ENCODE measurements at regions of chr10 and their contacts with region 1.

Region 1: DNA sequence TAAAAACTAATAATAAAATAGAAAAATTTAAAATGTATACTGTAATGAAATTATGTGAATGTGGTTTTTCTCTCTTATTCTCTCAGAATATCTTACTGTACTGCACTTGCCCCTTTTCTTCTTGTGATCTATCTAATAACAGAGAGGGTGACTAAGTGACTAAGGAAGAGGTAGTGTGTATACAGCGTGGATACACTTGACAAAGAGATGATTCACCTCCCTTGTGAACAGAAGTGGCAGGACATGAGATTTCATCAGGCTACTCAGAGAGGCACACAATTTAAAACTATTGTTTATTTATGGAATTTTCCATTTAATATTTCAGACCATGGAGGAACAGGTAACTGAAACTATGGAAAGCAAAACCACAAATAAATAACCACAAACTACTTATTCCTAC is 806.6 kb upstream of the GHITM start:
- DNase-seq: no peak
- H3K4me3 ChIP-seq: no peak overlapping the region
- H3K27ac ChIP-seq: no peak overlapping the region
- H3K4me1 ChIP-seq: no peaks in the 10 kb centered on the region
- H3K27me3 ChIP-seq: no peaks in the 10 kb centered on the region
- CTCF ChIP-seq: no peak
- POLR2A ChIP-seq: no peak

Region 2: GRCh38 chr10:82953909-82954308 is 378.8 kb before region 1 on chr10:
- intact Hi-C with region 1: no loop called
- DNase-seq: no peak
- H3K4me3 ChIP-seq: no peak overlapping the region
- H3K27ac ChIP-seq: no peak overlapping the region
- H3K4me1 ChIP-seq: no peaks in the 10 kb centered on the region
- H3K27me3 ChIP-seq: no peaks in the 10 kb centered on the region
- CTCF ChIP-seq: no peak
- POLR2A ChIP-seq: no peak

Region 3: DNA sequence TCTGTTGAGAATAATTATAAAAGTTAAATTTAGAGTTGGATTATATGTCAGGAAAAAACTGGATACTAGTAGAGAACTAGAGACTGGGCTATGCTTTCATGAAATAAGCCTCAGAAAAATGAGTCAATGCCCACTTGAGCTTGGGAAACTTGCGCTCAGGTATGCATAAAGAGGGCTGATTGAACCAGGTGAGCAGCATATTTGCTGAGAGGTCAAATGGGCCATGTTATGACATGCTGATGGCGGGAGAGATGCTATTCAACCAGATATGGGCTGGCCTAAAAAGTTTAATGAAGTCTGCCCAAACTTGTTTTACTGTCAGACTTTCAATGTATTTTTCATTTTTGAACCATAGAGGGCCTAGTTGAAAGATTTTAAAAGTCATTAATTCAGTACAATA is 31.0 kb before region 1 on chr10:
- intact Hi-C with region 1: loop called (anchors 2 kb)
- DNase-seq: no peak
- H3K4me3 ChIP-seq: no peak overlapping the region
- H3K27ac ChIP-seq: no peak overlapping the region
- H3K4me1 ChIP-seq: no peaks in the 10 kb centered on the region
- H3K27me3 ChIP-seq: peaks cover 0 to 3% of the 10 kb centered on the region in 2 donors
- CTCF ChIP-seq: no peak
- POLR2A ChIP-seq: no peak

Region 4: DNA sequence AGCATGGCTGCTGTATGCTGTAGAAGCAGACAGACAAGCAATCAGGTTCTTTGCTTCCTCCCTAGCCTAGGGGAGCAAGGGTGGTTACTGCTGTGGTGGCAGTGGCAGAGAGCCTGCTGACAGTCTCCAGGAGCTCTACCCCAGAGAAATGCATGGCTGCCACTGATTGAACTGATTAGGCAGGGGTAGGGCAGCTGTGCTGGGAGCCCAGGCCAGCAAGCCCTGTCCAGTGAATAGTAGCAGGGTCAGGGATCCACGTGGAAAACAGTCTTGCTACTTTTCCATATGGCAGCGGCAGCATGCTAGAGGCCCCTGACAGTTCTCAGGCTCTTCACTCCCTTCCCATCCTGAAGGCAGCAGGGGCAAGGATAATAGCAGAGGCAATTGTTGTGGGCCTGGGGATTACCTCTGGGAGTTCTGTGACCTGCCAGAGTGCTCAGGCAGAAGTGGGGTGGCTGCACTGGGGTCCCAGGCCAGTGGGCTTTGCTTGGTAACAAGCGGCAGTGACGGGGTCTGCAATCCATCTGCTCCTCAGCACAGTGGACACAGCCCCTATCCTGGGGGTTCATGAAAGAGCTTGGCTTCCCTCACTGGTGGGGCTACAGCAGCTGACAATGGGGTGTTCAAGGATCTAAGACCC is 247.8 kb after region 1 on chr10:
- intact Hi-C with region 1: no loop called
- DNase-seq: no peak
- H3K4me3 ChIP-seq: no peak overlapping the region
- H3K27ac ChIP-seq: no peak overlapping the region
- H3K4me1 ChIP-seq: no peaks in the 10 kb centered on the region
- H3K27me3 ChIP-seq: no peaks in the 10 kb centered on the region
- CTCF ChIP-seq: no peak
- POLR2A ChIP-seq: no peak